ENCODE measurements at regions of chr7 and their contacts with region 1.

Region 1: DNA sequence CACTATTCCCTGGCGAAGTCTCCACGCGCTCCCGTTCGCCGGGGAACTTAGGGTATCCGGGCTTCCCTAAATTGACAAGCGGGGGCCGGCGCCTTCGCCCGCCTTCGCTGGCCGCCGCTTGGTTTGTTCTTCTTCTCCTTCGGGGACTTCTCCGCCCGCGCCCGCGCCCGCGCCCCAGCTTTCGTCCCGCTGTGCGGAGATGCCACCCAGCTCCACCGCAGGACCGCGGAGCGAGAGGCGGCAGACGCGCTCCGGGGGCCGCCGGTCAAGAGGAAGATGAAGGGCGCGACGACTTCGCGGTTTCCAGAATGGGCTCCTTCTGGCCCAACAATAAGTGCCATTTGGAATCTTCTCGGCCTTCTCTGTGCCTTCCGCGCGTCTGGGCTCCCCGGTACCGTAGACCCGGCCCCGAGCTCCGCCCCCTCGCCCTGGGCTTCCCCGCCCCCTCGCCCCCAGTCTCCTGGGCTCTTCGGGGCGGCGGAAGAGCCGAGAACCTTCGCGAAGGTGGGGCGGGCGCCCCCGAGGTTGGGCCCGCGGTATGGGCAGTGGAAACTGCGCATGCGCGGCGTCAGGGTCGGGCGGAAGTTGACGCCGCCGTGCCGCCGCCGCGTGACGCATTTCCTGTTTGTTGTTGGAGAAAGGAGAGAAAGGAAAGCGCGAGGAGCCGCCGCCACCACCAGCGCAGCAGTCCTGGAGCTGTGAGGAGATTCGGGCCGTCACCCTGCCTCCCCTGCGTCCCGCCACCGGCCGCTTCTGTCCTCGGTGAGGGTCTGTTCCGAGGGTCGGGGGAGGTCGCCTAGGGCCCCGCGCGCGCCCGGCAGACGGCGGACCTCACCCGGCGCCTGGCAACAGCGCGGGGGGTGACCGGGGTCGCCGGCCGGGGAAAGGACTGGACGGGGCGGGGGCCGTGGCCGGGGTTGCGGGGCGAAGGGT is at the start of gene DNAJB6:
- DNase-seq: peak; percentile 94
- H3K4me3 Mint-ChIP-seq: peak within 1 kb of the TSS; percentile 97
- H3K27ac Mint-ChIP-seq: peak within 1 kb of the TSS; percentile 95
- H3K4me1 Mint-ChIP-seq: peaks cover 16% of the 10 kb centered on the region
- H3K27me3 Mint-ChIP-seq: no peaks in the 10 kb centered on the region
- CTCF ChIP-seq: no peak
- total RNA-seq, gene DNAJB6: 118 and 137 TPM in 2 replicates

Region 2: DNA sequence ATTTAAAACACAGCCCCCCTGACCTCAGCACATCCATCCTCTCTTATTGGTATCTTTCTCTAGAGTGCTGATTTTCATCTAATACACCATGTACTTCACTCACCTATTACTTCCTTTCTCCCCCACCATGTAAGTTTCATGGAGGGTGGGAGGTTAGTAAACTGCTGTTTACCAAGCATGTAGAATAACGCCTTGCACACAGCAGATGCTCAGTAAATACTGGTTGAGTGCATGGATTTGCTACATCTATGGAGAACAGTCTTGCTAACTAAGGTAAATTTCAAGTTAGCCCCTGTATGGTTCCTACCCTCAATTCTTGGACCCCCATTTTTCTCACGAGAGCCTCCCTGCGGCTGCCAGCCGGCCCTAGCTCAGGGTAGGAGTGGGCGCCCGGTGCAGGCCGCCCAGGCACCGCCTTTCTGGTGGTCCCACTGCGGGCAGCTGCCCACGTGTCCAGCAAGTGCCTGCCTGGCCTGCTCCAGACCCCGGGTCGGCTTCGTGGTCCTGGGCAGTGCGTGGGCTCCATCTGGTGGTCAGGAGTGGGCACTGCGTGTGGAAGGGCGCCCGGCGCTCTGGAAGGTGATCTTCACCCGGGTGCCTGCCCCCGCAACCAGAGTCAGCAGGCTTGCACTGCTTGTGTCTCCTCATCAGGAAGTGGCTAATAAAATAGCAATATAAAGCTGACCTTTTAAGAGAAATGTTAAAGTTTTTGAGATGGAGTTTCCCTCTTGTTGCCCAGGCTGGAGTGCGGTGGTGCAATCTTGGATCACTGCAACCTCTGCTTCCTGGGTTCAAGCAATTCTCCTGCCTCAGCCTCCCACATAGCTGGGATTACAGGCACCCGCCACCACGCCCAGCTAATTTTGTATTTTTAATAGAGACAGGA is 63.2 kb before region 1 on chr7:
- CTCF ChIA-PET with region 1: no interaction called
- intact Hi-C with region 1: loop called (anchors 5 kb)
- DNase-seq: peak; percentile 76
- H3K4me3 Mint-ChIP-seq: no peak overlapping the region
- H3K27ac Mint-ChIP-seq: peak overlapping the region; percentile 5
- H3K4me1 Mint-ChIP-seq: no peaks in the 10 kb centered on the region
- H3K27me3 Mint-ChIP-seq: no peaks in the 10 kb centered on the region
- CTCF ChIP-seq: peak; percentile 94

Region 3: GRCh38 chr7:157299613-157300368 is 36.9 kb before region 1 on chr7:
- CTCF ChIA-PET with region 1: interaction called, 5 read pairs
- intact Hi-C with region 1: loop called (anchors 5 kb)
- DNase-seq: peak; percentile 67
- H3K4me3 Mint-ChIP-seq: peak overlapping the region; percentile 25
- H3K27ac Mint-ChIP-seq: peak overlapping the region; percentile 5
- H3K4me1 Mint-ChIP-seq: peaks cover 33% of the 10 kb centered on the region
- H3K27me3 Mint-ChIP-seq: no peaks in the 10 kb centered on the region
- CTCF ChIP-seq: peak; percentile 25

Region 4: DNA sequence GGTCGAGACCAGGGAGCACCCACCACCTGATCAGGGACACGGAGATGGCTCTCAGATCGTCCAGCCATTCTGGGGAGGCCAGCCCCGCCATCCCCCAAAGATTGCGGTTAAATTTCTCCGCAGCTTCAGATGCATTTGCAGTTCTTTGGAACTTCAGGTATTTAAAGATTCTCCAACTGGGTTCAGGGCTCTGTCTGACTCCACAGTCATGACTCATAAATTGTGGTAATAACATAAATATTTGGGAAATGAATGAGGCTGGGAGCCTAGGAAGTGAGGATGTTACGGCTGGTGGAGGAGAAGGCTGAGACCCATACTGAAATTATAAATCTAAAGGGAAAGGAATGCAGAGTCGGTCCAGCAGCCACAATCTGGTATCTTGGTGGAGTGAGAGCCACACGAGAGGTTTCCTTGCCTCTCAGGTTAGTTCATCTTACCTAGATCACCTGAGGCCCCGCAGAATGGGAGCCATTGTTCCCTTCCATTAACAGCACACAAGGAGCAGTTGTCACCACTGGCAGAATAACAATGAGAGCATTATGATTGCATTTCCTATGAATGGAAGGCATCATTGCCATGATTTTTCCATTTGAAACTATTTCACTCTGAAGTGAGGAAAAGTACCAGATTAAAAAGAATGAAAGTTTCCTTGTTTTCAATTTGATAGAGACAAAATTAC is 26.5 kb before region 1 on chr7:
- CTCF ChIA-PET with region 1: interaction called, 3 read pairs
- intact Hi-C with region 1: loop called (anchors 2 kb)
- DNase-seq: peak; percentile 66
- H3K4me3 Mint-ChIP-seq: peak overlapping the region; percentile 26
- H3K27ac Mint-ChIP-seq: peak overlapping the region; percentile 97
- H3K4me1 Mint-ChIP-seq: peaks cover 28% of the 10 kb centered on the region
- H3K27me3 Mint-ChIP-seq: no peaks in the 10 kb centered on the region
- CTCF ChIP-seq: no peak

Region 5: DNA sequence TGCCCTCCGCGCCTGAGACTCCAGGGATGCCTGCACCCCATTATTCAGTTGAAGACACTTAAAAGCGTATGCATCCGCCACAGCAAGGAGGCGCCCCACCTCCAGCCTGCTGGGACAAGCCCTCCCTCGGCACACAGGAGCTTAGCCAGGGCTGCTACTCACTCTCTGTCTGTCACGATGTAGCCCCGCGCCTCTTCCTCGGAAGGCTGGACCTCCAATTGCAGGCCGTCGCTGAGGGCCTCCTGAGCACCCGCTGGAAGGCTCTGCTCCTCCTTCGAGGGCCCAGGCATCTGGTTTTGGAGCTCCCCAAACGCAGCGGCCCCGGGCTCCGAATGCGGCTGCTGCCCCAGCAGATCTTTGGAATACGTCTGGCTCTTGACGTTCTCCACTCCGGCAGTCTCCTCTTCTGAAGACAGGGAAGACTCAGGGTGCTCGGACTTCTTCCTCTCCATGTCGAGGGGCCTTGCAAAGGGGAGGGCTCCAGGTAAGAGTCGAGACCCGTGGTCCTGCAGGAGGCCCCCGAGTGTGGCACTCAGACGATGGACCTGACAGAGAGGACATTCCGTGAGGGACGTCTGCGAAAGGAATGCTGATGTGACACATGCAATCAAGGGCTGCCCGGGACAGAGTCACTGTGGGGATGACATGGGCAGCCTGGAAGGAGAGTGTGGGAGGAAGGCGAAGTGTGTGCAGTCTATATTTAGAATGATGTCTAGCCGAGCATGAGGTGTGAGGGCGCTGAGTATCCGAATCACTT is 797.0 kb after region 1 on chr7:
- CTCF ChIA-PET with region 1: no interaction called
- intact Hi-C with region 1: no loop called
- DNase-seq: no peak
- H3K4me3 Mint-ChIP-seq: no peak overlapping the region
- H3K27ac Mint-ChIP-seq: no peak overlapping the region
- H3K4me1 Mint-ChIP-seq: no peaks in the 10 kb centered on the region
- H3K27me3 Mint-ChIP-seq: no peaks in the 10 kb centered on the region
- CTCF ChIP-seq: no peak